ENCODE measurements at regions of chr18 and their contacts with region 1.

Region 1: DNA sequence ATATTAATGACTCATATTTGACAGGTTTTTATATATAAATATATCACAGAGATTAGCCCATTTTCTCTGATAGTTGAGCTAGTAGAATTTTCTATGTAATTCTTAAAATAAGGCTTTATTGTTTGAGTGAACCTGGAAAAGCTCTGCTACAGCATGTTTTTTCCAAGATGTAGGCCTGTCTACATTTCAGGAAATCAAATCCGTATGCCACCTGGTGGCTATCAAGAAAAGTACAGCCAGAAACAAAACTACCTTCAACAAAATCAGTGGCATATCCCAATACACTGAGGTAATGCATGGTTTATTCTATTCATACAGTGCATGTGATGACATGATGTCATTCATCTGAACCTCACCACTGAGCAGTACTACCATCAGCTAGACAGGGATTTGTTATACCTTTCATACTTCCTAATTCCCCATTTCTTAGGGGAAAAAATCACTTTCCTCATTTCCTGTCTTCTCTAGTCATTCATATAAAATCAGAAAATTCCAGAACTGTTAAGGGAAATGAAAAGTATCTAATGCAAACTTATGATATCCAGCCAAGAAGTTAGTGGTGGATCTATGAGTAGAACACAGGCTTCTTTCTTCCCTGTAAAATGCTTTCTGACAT is 310.4 kb upstream of the SYT4 start:
- DNase-seq: no peak
- ATAC-seq: peak; percentile 74; the same call in 1 of the 2 replicates
- H3K4me3 ChIP-seq: no peak overlapping the region
- H3K27ac ChIP-seq: no peak overlapping the region
- H3K4me1 ChIP-seq: no peaks in the 10 kb centered on the region
- H3K27me3 ChIP-seq: no peaks in the 10 kb centered on the region
- CTCF ChIP-seq: peak; percentile 46; the same call in 1 of the 2 replicates

Region 2: GRCh38 chr18:43571078-43571689 is 16.5 kb before region 1 on chr18:
- CTCF ChIA-PET with region 1: interaction called, 11 read pairs
- POLR2A ChIA-PET with region 1: no interaction called
- in situ Hi-C with region 1: no loop called
- intact Hi-C with region 1: no loop called
- DNase-seq: no peak
- ATAC-seq: no peak
- H3K4me3 ChIP-seq: no peak overlapping the region
- H3K27ac ChIP-seq: no peak overlapping the region
- H3K4me1 ChIP-seq: no peaks in the 10 kb centered on the region
- H3K27me3 ChIP-seq: no peaks in the 10 kb centered on the region
- CTCF ChIP-seq: peak; percentile 41; the same call in 1 of the 2 replicates

Region 3: DNA sequence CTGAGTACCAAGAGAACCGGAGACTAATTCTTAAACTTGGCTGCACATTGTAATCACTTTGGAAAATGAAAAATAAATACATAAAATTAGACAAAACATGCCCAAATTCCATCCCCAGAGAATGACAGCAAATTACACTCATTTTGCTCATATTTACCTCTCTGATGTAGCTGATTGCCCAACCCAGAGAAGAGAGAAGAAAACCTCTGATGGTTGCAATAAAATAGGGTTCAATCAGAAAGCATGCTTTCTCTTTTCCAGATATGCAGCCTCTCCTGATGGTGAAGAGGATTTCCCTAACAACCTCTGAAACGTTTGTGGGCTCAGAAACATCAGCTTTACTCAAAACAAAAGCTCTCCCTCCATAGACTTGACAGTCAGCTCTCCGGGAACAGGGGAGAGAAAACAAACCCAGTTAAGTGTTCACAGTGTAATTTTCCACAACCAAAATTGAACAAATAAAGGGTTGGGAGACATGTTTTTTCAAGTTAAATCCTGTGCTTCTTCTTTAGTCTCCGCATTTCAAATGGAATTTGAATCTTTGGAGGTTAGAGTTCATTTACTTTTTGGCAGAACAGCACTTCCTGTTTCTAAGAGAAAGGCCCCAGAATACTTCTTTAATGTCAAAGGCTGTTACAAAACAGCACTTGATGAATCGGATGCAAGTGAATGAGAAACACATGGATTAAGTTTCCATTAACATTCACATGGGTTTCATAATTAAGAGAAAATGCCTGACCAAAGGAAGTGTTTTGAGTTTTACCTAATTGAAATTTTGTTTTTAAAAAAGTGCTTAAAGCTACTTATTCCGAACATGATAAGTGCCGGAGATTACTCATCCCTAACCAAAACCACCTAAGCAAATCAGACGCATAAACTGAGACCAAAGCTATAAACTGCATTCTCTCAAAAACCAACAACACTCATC is 259.8 kb after region 1 on chr18:
- CTCF ChIA-PET with region 1: no interaction called
- POLR2A ChIA-PET with region 1: no interaction called
- in situ Hi-C with region 1: no loop called
- intact Hi-C with region 1: no loop called
- DNase-seq: no peak
- ATAC-seq: no peak
- H3K4me3 ChIP-seq: no peak overlapping the region
- H3K27ac ChIP-seq: no peak overlapping the region
- H3K4me1 ChIP-seq: no peaks in the 10 kb centered on the region
- H3K27me3 ChIP-seq: no peaks in the 10 kb centered on the region
- CTCF ChIP-seq: no peak